Heart left ventricle (tissue), 16 donors: ENCODE measurements at regions of chr1 and their contacts with region 1.

Region 1: GRCh38 chr1:19485362-19486187 is at the start of gene CAPZB:
- DNase-seq: peak; percentile 97 to 98 (median 97)
- ATAC-seq: peak; percentile 85 to 95 (median 93)
- H3K4me3 ChIP-seq: peak within 1 kb of the TSS; percentile 70 to 100 (median 98)
- H3K27ac ChIP-seq: peak within 1 kb of the TSS; percentile 95 to 100 (median 98)
- H3K4me1 ChIP-seq: peaks cover 18 to 64% (median 53%) of the 10 kb centered on the region in 12 donors
- H3K27me3 ChIP-seq: no peaks in the 10 kb centered on the region
- CTCF ChIP-seq: no peak
- POLR2A ChIP-seq: peak in 1 of 2 donors; percentile 88
- total RNA-seq, gene CAPZB: 77.8 to 348 (median 237) TPM

Region 2: DNA sequence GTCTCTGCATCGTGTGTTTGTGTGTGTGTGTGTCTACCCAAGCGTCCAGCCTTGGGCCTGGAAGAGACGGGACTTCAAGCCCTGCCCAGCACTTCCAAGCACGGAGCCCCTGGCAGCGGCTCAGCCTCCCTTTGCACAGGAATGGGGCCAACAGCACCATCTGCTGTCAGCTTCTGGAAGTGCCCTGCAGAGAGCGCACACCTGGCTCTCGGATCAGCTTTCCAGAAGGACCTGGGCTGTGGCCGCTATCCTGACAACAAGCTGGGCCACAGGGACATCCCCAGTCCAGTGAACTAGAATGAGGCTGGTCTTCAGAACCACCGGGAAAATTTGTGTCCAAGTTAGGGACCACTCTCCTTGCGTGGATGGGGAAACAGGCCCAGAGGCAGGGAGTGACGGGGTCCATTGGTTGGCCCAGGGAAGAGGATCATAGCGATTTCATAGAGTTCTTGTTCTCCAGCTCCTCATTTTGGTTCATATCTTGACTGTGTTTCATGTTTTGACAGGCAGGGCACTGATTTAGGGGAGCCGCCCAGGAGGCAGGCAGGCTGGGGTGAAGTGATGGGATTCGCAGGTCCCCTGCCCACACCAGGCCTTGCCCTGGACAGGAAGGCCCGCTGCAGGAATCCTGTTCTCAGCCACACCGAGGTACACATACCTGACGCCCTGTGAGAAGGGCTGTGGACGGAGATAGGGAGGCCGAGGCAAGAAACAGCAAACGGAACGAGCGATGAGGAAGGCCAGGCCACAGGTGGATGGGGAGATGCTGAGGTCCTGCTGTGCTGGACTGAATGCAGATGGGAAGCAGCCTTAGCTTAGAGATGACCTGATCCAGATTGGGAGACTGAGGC is 664.6 kb before region 1 on chr1:
- intact Hi-C with region 1: no loop called
- DNase-seq: peak; percentile 54 to 83 (median 73)
- ATAC-seq: peak; percentile 62 to 91 (median 87)
- H3K4me3 ChIP-seq: no peak overlapping the region
- H3K27ac ChIP-seq: no peak overlapping the region
- H3K4me1 ChIP-seq: peaks cover 0 to 4% (median 0%) of the 10 kb centered on the region in 12 donors
- H3K27me3 ChIP-seq: peaks cover 9 to 49% (median 21%) of the 10 kb centered on the region in 9 donors
- CTCF ChIP-seq: peak; percentile 73 to 92 (median 81)
- POLR2A ChIP-seq: no peak

Region 3: DNA sequence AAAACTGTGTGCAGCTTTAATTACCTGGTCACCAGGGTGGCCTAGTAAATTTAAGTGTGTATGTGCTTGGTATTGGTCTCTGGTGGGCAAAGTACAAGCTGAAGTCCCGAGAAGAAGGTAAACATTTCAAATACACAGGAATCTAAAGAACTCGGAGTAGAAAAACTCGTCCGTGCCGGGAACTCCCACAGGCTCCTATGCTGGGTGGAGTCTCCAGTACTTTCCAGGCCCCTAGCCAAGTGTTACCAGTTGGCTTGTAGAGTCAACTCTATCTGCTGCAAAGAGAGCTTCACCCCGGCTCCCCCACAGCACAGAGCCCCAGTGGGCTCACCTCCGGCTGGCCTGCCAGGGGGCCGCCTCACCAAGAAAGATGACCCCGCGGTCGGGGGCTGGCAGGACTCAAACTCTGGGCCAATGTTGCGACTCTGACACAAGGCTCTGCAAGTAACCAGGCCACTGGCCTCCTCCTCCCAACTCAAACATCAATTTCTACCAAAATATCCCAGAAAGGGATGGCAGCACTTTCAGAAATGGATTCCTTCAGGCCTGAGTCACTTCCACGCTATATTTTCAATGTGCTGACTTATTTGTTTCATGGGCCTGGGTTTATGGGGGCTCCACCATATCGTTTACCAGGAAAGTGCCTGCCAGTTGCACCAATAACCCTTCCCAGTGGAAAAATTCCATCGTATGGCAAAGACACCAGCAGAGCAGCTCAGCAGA is 99.5 kb before region 1 on chr1:
- intact Hi-C with region 1: loop called in 5 of 10 experiments (anchors 5 to 10 kb)
- DNase-seq: peak in 4 of 5 donors; percentile 67 to 81 (median 72)
- ATAC-seq: peak; percentile 71 to 82 (median 77)
- H3K4me3 ChIP-seq: peak overlapping the region in 1 of 12 donors; percentile 22
- H3K27ac ChIP-seq: peak overlapping the region in 9 of 12 donors; percentile 15 to 64 (median 37)
- H3K4me1 ChIP-seq: peaks cover 10 to 66% (median 47%) of the 10 kb centered on the region in 12 donors
- H3K27me3 ChIP-seq: no peaks in the 10 kb centered on the region
- CTCF ChIP-seq: no peak
- POLR2A ChIP-seq: no peak

Region 4: GRCh38 chr1:19398309-19398760 is 87.2 kb before region 1 on chr1:
- intact Hi-C with region 1: loop called in 5 of 10 experiments (anchors 5 to 10 kb)
- DNase-seq: no peak
- ATAC-seq: no peak
- H3K4me3 ChIP-seq: no peak overlapping the region
- H3K27ac ChIP-seq: peak overlapping the region in 1 of 12 donors; percentile 73
- H3K4me1 ChIP-seq: peaks cover 0 to 69% (median 45%) of the 10 kb centered on the region in 12 donors
- H3K27me3 ChIP-seq: no peaks in the 10 kb centered on the region
- CTCF ChIP-seq: peak in 4 of 12 donors; percentile 8 to 20 (median 15)
- POLR2A ChIP-seq: no peak

Region 5: GRCh38 chr1:19582302-19582701 is 96.7 kb after region 1 on chr1:
- intact Hi-C with region 1: loop called in 3 of 10 experiments (anchors 5 kb)
- DNase-seq: peak in 4 of 5 donors; percentile 31 to 77 (median 40)
- ATAC-seq: peak in 2 of 4 donors; percentile 62 to 65
- H3K4me3 ChIP-seq: no peak overlapping the region
- H3K27ac ChIP-seq: no peak overlapping the region
- H3K4me1 ChIP-seq: peaks cover 0 to 9% (median 0%) of the 10 kb centered on the region in 12 donors
- H3K27me3 ChIP-seq: no peaks in the 10 kb centered on the region
- CTCF ChIP-seq: peak; percentile 37 to 71 (median 56)
- POLR2A ChIP-seq: no peak

Region 6: GRCh38 chr1:19643602-19644394 is 158.2 kb after region 1 on chr1 and contains the start of gene NBL1:
- intact Hi-C with region 1: loop called in 8 of 10 experiments (anchors 2 to 10 kb)
- DNase-seq: peak; percentile 74 to 87 (median 86)
- ATAC-seq: peak; percentile 38 to 84 (median 78)
- H3K4me3 ChIP-seq: peak within 1 kb of the TSS; percentile 24 to 98 (median 81)
- H3K27ac ChIP-seq: peak within 1 kb of the TSS; percentile 81 to 97 (median 92)
- H3K4me1 ChIP-seq: peaks cover 5 to 53% (median 31%) of the 10 kb centered on the region in 12 donors
- H3K27me3 ChIP-seq: peaks cover 0 to 29% (median 0%) of the 10 kb centered on the region in 9 donors
- CTCF ChIP-seq: peak in 1 of 12 donors; percentile 2
- POLR2A ChIP-seq: no peak
- total RNA-seq, gene NBL1: 19.3 to 61.4 (median 33.1) TPM